CD4-positive, alpha-beta memory T cell (primary cell): ENCODE measurements at regions of chr5 and their contacts with region 1.

Region 1: GRCh38 chr5:82641331-82642003 is 363.3 kb upstream of the RPS23 start:
- DNase-seq: peak in 4 of 5 donors; percentile 25 to 38 (median 28)
- H3K4me3 ChIP-seq: no peak overlapping the region
- H3K4me3 Mint-ChIP-seq: no peak overlapping the region
- H3K27ac ChIP-seq: no peak overlapping the region
- H3K27ac Mint-ChIP-seq: no peak overlapping the region
- H3K4me1 ChIP-seq: no peaks in the 10 kb centered on the region
- H3K4me1 Mint-ChIP-seq: no peaks in the 10 kb centered on the region
- H3K27me3 ChIP-seq: no peaks in the 10 kb centered on the region
- H3K27me3 Mint-ChIP-seq: peaks cover 0 to 4% of the 10 kb centered on the region in 2 donors

Region 2: DNA sequence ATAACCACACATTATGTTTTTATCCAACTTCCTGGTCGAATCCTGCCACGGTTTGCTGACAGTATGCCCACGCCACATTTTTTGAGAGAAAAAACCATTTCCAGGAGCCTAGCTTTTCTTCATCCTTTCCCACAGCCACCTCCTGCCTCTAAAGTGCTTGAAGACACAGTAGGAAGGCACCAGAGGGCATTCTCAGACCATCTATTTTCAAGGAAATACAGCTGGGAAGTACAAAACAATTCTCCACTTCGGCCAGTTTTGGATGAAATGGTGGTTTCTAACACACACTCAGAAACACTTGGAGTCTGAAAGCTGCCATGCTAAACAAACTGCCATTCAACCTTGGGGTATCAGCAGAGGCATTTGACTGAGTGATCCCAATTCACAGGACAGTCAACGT is 277.0 kb before region 1 on chr5:
- CTCF ChIA-PET with region 1: no interaction called
- POLR2A ChIA-PET with region 1: no interaction called
- intact Hi-C with region 1: no loop called
- DNase-seq: no peak
- H3K4me3 ChIP-seq: no peak overlapping the region
- H3K4me3 Mint-ChIP-seq: no peak overlapping the region
- H3K27ac ChIP-seq: no peak overlapping the region
- H3K27ac Mint-ChIP-seq: no peak overlapping the region
- H3K4me1 ChIP-seq: no peaks in the 10 kb centered on the region
- H3K4me1 Mint-ChIP-seq: peaks cover 0 to 12% (median 3%) of the 10 kb centered on the region in 4 donors
- H3K27me3 ChIP-seq: no peaks in the 10 kb centered on the region
- H3K27me3 Mint-ChIP-seq: peaks cover 4 to 7% of the 10 kb centered on the region in 2 donors

Region 3: DNA sequence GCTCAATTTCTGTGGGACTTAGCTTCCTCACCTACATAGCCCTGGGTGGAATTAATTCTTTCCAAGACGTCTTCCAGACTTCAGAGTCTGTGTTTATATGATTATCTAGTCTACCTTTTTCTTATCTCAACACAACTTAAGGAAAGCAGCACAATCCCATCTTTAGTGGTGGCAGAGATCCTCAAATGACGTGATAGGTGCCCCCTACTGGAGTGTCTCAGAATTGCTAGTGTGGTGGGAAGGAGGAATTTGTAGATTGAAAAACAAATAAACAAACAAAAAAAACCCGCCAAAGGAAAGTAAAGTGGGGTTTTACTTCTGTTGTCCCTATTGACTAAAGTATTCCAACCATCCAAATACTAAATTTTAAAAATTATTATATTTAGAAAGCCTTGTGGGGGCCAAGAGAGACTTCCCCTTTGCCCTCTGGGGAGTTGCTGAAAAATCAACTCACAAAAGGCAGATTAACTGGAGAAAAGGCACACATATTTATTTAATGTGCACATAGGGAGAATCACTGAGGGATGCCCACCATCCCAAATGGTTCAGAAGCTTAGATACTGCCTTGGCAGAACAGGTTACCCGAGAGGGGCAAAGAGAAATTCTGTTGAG is 152.4 kb after region 1 on chr5:
- CTCF ChIA-PET with region 1: no interaction called
- POLR2A ChIA-PET with region 1: no interaction called
- intact Hi-C with region 1: loop called (anchors 2 kb)
- DNase-seq: peak in 4 of 5 donors; percentile 16 to 28 (median 22)
- H3K4me3 ChIP-seq: no peak overlapping the region
- H3K4me3 Mint-ChIP-seq: no peak overlapping the region
- H3K27ac ChIP-seq: no peak overlapping the region
- H3K27ac Mint-ChIP-seq: peak overlapping the region in 1 of 7 donors; percentile 17
- H3K4me1 ChIP-seq: no peaks in the 10 kb centered on the region
- H3K4me1 Mint-ChIP-seq: no peaks in the 10 kb centered on the region
- H3K27me3 ChIP-seq: no peaks in the 10 kb centered on the region
- H3K27me3 Mint-ChIP-seq: peaks cover 2 to 4% of the 10 kb centered on the region in 2 donors

Region 4: GRCh38 chr5:83430130-83431010 is 788.9 kb after region 1 on chr5:
- CTCF ChIA-PET with region 1: interaction called, 15 read pairs
- POLR2A ChIA-PET with region 1: no interaction called
- intact Hi-C with region 1: loop called (anchors 1 kb)
- DNase-seq: peak; percentile 45 to 58 (median 52)
- H3K4me3 ChIP-seq: no peak overlapping the region
- H3K4me3 Mint-ChIP-seq: no peak overlapping the region
- H3K27ac ChIP-seq: no peak overlapping the region
- H3K27ac Mint-ChIP-seq: no peak overlapping the region
- H3K4me1 ChIP-seq: no peaks in the 10 kb centered on the region
- H3K4me1 Mint-ChIP-seq: no peaks in the 10 kb centered on the region
- H3K27me3 ChIP-seq: no peaks in the 10 kb centered on the region
- H3K27me3 Mint-ChIP-seq: peaks cover 0 to 2% of the 10 kb centered on the region in 2 donors

Region 5: DNA sequence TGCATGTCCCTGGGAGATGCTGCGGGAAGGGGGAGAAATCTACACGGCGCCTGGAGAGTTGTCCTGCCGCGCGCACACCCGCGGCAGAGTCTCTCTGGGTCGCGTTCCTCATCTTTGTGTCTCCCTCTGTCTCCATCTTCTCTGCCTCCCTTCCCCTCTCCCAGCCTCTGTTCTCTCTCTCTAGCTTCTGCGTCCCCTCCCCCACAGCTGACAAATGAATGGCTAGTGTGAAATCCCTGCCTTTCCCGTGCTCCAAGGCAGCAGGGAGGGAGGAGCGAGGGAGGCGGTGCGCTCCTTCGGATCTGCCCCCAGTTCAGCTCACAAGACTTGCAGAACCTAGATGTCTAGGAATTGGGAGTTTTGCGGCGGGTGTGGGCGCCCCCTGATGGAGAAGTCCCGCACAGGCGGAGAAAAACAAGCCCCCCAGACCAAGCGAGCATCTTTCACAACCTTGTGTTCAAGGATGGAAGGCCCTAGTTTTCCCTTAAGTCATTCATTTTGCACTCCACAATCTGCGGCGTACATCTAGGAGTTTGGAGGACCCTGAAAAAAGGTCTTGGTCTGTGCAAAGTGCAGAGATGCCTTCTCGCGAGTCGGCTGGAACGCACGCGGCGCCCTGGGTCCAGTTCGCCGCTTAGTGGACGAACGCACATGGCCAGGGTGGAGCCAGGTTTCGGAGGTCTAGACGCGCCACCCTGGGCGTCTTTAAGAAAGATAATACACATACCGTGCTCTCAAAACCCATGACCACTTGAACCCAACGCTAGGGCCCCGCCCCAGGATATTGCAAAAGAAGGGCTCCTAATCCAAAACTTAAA is 832.1 kb after region 1 on chr5:
- CTCF ChIA-PET with region 1: no interaction called
- POLR2A ChIA-PET with region 1: no interaction called
- intact Hi-C with region 1: loop called (anchors 2 kb)
- DNase-seq: peak in 4 of 5 donors; percentile 36 to 42 (median 37)
- H3K4me3 ChIP-seq: peak overlapping the region; percentile 32 to 57
- H3K4me3 Mint-ChIP-seq: peak overlapping the region; percentile 77 to 93 (median 86)
- H3K27ac ChIP-seq: no peak overlapping the region
- H3K27ac Mint-ChIP-seq: peak overlapping the region in 3 of 7 donors; percentile 43 to 70 (median 54)
- H3K4me1 ChIP-seq: peaks cover 36% of the 10 kb centered on the region
- H3K4me1 Mint-ChIP-seq: peaks cover 20 to 44% (median 33%) of the 10 kb centered on the region in 4 donors
- H3K27me3 ChIP-seq: peaks cover 41% of the 10 kb centered on the region
- H3K27me3 Mint-ChIP-seq: peaks cover 52 to 57% of the 10 kb centered on the region in 2 donors

Region 6: DNA sequence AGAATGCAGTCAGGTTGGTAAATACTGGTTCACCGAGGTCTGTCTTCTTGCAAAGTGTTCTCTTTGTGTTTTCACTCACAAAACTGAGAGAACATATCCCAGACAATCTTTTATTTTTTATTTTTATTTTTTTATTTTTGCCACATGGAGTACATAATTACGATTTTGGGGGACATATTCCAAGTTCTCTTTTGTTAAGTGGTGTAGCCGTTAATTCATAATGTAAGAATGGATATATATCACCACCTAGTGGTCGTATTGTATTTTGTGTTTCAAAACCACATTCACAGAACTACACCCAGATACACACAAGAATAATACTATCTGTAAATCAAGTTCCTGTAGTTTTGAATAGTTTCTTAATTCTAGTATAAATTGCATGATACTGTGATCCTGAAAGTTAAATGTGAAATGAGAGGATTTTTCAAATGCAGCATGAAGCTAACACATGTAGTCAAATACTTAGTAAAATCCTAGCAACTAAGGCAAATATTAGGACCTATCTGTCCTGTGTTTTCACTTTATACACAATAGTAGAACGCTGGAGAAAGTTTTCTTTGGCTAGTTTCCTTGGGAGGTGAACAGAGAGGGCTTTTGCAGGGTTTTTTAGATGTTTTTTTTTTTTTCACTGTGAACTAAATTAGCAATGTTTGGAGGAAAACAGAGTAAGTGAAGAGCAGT is 922.7 kb after region 1 on chr5:
- CTCF ChIA-PET with region 1: interaction called, 6 read pairs
- POLR2A ChIA-PET with region 1: no interaction called
- intact Hi-C with region 1: loop called (anchors 1 kb)
- DNase-seq: peak in 4 of 5 donors; percentile 27 to 40 (median 34)
- H3K4me3 ChIP-seq: no peak overlapping the region
- H3K4me3 Mint-ChIP-seq: no peak overlapping the region
- H3K27ac ChIP-seq: no peak overlapping the region
- H3K27ac Mint-ChIP-seq: no peak overlapping the region
- H3K4me1 ChIP-seq: no peaks in the 10 kb centered on the region
- H3K4me1 Mint-ChIP-seq: no peaks in the 10 kb centered on the region
- H3K27me3 ChIP-seq: no peaks in the 10 kb centered on the region
- H3K27me3 Mint-ChIP-seq: peaks cover 13% of the 10 kb centered on the region in 2 donors